PC-3 (cell line): ENCODE measurements at regions of chr7 and their contacts with region 1.

Region 1: DNA sequence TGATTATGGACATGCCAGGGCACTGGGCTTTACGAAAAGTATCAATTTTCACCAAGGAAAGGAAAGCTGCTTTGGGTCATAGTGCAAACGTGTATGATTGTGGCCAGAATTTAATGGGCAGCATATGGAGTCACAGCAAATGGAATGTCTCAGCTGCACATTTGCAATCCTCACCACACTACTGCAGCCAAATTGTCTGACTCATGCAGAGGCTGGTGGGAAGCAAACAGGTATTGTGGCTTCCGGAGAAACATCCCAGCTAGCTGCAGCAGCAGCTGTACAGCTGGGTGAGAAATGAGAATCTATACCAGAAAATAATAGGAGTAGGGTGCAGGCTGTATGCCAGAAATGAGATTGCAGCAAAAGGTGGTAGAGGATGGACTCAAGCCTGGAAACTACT is 374.7 kb upstream of the VWC2 start:
- DNase-seq: peak; percentile 95
- ATAC-seq: peak; percentile 72
- H3K4me3 ChIP-seq: peak overlapping the region; percentile 39; the same call in 1 of the 2 replicates
- H3K27ac ChIP-seq: peak overlapping the region; percentile 89
- H3K4me1 ChIP-seq: peaks cover 65% of the 10 kb centered on the region
- H3K27me3 ChIP-seq: no peaks in the 10 kb centered on the region
- CTCF ChIP-seq: no peak

Region 2: DNA sequence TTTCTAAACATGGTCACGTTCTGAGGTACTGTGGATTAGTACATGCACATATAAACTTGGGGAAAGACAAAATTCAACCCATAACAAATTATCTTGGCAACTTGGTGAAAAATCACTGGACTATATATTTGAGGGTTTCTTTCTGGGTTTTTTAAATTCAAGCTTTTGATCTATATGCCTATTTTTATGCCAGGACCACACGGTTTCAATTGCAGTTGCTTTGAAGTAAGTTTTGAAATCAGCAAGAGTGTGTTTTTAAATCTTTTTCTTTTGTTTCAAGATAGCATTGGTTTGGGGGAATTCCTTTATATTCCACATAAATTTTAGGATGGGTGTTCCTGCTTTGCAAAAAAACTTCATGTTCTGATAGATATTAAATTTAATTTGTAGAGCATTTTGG is 31.7 kb before region 1 on chr7:
- CTCF ChIA-PET with region 1: no interaction called
- POLR2A ChIA-PET with region 1: no interaction called
- intact Hi-C with region 1: no loop called
- DNase-seq: no peak
- ATAC-seq: no peak
- H3K4me3 ChIP-seq: no peak overlapping the region
- H3K27ac ChIP-seq: no peak overlapping the region
- H3K4me1 ChIP-seq: no peaks in the 10 kb centered on the region
- H3K27me3 ChIP-seq: peaks cover 17% of the 10 kb centered on the region
- CTCF ChIP-seq: no peak

Region 3: GRCh38 chr7:49425277-49425818 is 26.6 kb after region 1 on chr7:
- CTCF ChIA-PET with region 1: no interaction called
- POLR2A ChIA-PET with region 1: no interaction called
- intact Hi-C with region 1: loop called (anchors 1 kb)
- DNase-seq: peak; percentile 46
- ATAC-seq: peak; percentile 39
- H3K4me3 ChIP-seq: no peak overlapping the region
- H3K27ac ChIP-seq: peak overlapping the region; percentile 92
- H3K4me1 ChIP-seq: peaks cover 44% of the 10 kb centered on the region
- H3K27me3 ChIP-seq: no peaks in the 10 kb centered on the region
- CTCF ChIP-seq: no peak

Region 4: GRCh38 chr7:50092579-50093491 is 694.1 kb after region 1 on chr7 and contains the start of gene ZPBP:
- CTCF ChIA-PET with region 1: no interaction called
- POLR2A ChIA-PET with region 1: no interaction called
- intact Hi-C with region 1: no loop called
- DNase-seq: peak; percentile 67
- ATAC-seq: peak; percentile 45; the same call in 1 of the 2 replicates
- H3K4me3 ChIP-seq: peak within 1 kb of the TSS; percentile 51
- H3K27ac ChIP-seq: no peak within 1 kb of the TSS
- H3K4me1 ChIP-seq: no peaks in the 10 kb centered on the region
- H3K27me3 ChIP-seq: peaks cover 25% of the 10 kb centered on the region
- CTCF ChIP-seq: peak; percentile 84
- total RNA-seq, gene ZPBP: not detected in 2 replicates